Activated CD4-positive, alpha-beta T cell treated with anti-CD3 and anti-CD28 coated beads for 36 hours (primary cell): ENCODE measurements at regions of chr16 and their contacts with region 1.

Region 1: DNA sequence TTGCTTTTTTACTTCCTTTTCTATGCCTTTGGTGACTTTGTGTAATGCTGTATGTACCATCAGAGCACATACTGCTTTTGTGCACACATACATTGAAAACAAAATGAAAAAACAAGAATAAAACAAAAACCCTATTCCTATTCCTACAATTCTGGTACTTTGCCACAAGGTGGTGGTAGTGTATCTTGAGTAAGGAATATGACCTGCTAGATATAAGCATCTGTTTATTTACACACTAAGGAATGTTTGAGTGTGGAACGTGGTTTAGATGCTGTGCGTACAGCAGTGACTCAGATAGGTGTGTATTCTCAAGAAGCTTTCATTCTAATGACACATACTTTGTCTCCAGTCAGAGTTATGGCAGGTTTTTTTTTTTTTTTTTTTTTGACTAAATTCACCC is 606.2 kb downstream of the WWOX start:
- DNase-seq: peak; percentile 30
- ATAC-seq: peak; percentile 99
- H3K4me3 Mint-ChIP-seq: no peak overlapping the region
- H3K27ac Mint-ChIP-seq: no peak overlapping the region
- H3K4me1 Mint-ChIP-seq: peaks cover 13% of the 10 kb centered on the region
- H3K27me3 Mint-ChIP-seq: no peaks in the 10 kb centered on the region

Region 2: DNA sequence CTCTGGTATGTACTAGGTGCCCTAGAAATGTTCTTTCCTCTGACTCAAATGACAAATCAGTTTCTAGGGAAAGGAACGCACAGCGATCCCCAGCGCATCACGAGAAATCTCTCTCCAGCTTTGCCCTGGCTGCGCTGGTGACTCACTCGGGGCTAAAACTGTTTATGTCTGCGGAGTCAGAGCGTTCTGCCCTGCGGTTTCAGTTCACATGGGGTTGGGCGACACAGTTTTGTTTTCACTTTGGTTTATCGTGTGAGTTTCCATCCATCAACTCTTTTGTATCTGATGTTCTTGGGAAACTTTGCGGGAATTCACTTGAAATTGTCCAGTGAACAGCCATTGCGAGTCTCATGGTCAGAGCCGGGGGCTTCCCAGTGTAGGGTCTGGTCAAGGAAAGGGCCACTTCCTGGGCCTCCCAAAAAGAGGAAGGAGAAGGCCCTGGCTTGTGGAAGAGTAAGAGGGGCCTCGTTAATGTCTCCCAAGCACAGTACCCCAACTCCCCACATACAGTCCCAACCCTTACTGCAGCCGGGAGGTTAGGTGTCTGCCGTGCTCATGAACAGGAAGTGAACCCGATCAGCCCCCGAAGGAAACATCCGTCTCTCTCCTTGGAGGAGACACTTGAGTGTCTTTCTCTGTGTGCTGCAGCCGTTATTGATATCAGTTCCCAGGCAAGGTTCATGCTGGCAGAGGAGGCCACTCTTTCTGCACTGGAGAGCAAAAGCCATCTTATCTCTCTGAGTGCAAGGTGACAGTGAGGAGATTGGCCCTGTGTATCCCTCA is 37.0 kb after region 1 on chr16:
- CTCF ChIA-PET with region 1: no interaction called
- POLR2A ChIA-PET with region 1: no interaction called
- intact Hi-C with region 1: loop called in 1 of 2 experiments (anchors 1 kb)
- DNase-seq: peak; percentile 89
- ATAC-seq: peak; percentile 95
- H3K4me3 Mint-ChIP-seq: peak overlapping the region; percentile 61
- H3K27ac Mint-ChIP-seq: peak overlapping the region; percentile 96
- H3K4me1 Mint-ChIP-seq: peaks cover 22% of the 10 kb centered on the region
- H3K27me3 Mint-ChIP-seq: no peaks in the 10 kb centered on the region

Region 3: DNA sequence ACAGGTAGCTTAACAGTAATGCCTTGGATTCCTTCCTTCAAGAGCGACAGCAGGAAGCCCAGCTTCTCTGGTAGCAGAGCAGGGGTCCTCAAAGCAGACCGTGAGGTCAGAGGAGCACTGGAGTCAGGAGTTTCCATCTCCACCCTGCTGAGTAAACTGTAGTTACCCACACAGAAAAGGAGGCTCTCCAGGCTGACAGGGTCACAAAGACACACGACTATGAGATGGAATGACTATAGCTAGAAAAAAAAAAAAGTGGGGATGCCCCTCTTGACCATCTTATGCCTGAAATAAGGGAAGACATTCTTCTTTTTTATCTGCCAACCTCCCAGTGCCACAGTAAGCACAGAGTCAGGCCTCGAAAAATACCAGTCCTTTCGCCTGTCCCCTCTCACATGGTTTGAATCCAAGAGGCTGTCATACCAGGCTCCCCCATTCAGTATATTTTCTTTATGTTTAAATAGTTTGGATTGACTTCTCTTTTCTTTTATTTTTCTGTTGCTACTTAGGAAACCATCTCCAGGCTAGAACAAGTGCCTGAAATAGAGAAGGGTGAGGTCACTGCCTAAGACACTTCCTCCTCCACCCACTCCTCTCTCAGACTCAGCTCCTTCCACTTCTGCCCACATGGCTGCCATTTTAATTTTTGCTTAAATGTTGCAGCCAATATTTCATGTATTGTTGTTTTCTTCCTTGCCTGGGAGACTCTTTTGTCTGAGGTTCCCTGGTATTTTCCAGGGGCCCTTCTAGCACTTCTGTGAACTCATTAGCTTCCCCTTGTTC is 187.4 kb after region 1 on chr16:
- CTCF ChIA-PET with region 1: interaction called, 4 read pairs
- POLR2A ChIA-PET with region 1: no interaction called
- intact Hi-C with region 1: loop called in 1 of 2 experiments (anchors 2 kb)
- DNase-seq: peak; percentile 39
- ATAC-seq: peak; percentile 65
- H3K4me3 Mint-ChIP-seq: no peak overlapping the region
- H3K27ac Mint-ChIP-seq: peak overlapping the region; percentile 80
- H3K4me1 Mint-ChIP-seq: peaks cover 61% of the 10 kb centered on the region
- H3K27me3 Mint-ChIP-seq: no peaks in the 10 kb centered on the region

Region 4: DNA sequence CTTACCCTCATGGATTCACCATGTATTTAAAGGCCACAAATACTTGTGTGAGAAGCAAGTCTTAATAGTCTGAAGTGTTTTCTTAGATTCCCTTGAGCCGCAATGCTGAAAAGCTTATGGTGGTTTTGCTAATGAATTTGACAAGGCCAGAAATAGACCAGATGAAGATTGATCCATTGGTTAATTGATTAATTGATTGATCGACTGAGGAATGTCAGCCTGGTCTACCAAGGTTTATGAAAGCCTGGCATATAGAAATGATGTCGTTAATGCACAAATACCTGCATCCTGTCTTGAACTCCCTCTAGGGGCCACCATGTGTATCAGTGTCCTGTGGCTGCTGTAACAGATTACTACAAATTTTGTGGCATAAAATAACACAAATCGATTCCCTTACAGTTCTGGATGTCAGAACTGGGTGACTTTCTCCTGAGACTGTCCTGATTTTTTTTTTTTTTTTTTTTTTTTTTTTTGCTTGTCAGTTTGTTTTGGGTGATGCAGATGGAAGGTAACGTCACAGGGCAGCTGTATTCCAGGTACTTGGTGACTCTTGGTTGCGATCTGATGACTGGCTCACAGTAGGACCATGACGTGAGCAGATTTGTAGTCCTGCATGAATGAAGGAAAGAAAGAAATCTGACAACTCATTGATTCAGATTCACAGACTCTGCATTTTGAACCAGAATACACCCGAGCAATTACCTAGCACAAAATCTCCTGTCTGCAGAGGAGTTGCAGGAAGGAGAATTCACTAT is 341.7 kb after region 1 on chr16:
- CTCF ChIA-PET with region 1: no interaction called
- POLR2A ChIA-PET with region 1: no interaction called
- intact Hi-C with region 1: loop called in 1 of 2 experiments (anchors 5 kb)
- DNase-seq: peak; percentile 28
- ATAC-seq: peak; percentile 36
- H3K4me3 Mint-ChIP-seq: no peak overlapping the region
- H3K27ac Mint-ChIP-seq: no peak overlapping the region
- H3K4me1 Mint-ChIP-seq: peaks cover 33% of the 10 kb centered on the region
- H3K27me3 Mint-ChIP-seq: no peaks in the 10 kb centered on the region

Region 5: GRCh38 chr16:79261481-79261940 is 555.8 kb after region 1 on chr16:
- CTCF ChIA-PET with region 1: no interaction called
- POLR2A ChIA-PET with region 1: no interaction called
- intact Hi-C with region 1: loop called in 1 of 2 experiments (anchors 10 kb)
- DNase-seq: peak; percentile 61
- ATAC-seq: peak; percentile 56
- H3K4me3 Mint-ChIP-seq: no peak overlapping the region
- H3K27ac Mint-ChIP-seq: peak overlapping the region; percentile 21
- H3K4me1 Mint-ChIP-seq: peaks cover 32% of the 10 kb centered on the region
- H3K27me3 Mint-ChIP-seq: peaks cover 22% of the 10 kb centered on the region

Region 6: GRCh38 chr16:80466024-80466987 is 1760.6 kb after region 1 on chr16:
- CTCF ChIA-PET with region 1: no interaction called
- POLR2A ChIA-PET with region 1: no interaction called
- intact Hi-C with region 1: loop called (anchors 1 to 10 kb)
- DNase-seq: peak; percentile 82
- ATAC-seq: peak; percentile 78
- H3K4me3 Mint-ChIP-seq: no peak overlapping the region
- H3K27ac Mint-ChIP-seq: no peak overlapping the region
- H3K4me1 Mint-ChIP-seq: no peaks in the 10 kb centered on the region
- H3K27me3 Mint-ChIP-seq: peaks cover 9% of the 10 kb centered on the region